ENCODE measurements at regions of chr11 and their contacts with region 1.

Region 1: GRCh38 chr11:5684646-5685362 is at the start of gene TRIM5:
- DNase-seq: peak; percentile 93 to 96 (median 94)
- ATAC-seq: peak; percentile 99
- H3K4me3 ChIP-seq: peak within 1 kb of the TSS; percentile 45
- H3K27ac ChIP-seq: peak within 1 kb of the TSS; percentile 89
- H3K4me1 ChIP-seq: peaks cover 0 to 2% of the 10 kb centered on the region in 2 experiments; a peak in 2 of 5 replicates
- H3K27me3 ChIP-seq: no peaks in the 10 kb centered on the region
- CTCF ChIP-seq: peak; percentile 77 to 84 (median 82)
- EP300 ChIP-seq: peak; percentile 45; the same call in 1 of the 2 replicates
- POLR2A ChIP-seq: peak; percentile 75
- RAD21 ChIP-seq: peak; percentile 76 to 82
- polyA plus RNA-seq, gene TRIM5: 13.7 to 18.0 TPM

Region 2: GRCh38 chr11:5696210-5696609 is 11.4 kb after region 1 on chr11:
- CTCF ChIA-PET with region 1: no interaction called
- POLR2A ChIA-PET with region 1: interaction called, 12 read pairs
- in situ Hi-C with region 1: no loop called
- intact Hi-C with region 1: no loop called
- DNase-seq: no peak
- ATAC-seq: no peak
- H3K4me3 ChIP-seq: no peak overlapping the region
- H3K27ac ChIP-seq: no peak overlapping the region
- H3K4me1 ChIP-seq: peaks cover 0 to 10% of the 10 kb centered on the region in 2 experiments; a peak in 3 of 5 replicates
- H3K27me3 ChIP-seq: peaks cover 0 to 4% of the 10 kb centered on the region in 2 experiments; a peak in 2 of 5 replicates
- CTCF ChIP-seq: no peak
- EP300 ChIP-seq: no peak
- POLR2A ChIP-seq: no peak
- RAD21 ChIP-seq: no peak

Region 3: DNA sequence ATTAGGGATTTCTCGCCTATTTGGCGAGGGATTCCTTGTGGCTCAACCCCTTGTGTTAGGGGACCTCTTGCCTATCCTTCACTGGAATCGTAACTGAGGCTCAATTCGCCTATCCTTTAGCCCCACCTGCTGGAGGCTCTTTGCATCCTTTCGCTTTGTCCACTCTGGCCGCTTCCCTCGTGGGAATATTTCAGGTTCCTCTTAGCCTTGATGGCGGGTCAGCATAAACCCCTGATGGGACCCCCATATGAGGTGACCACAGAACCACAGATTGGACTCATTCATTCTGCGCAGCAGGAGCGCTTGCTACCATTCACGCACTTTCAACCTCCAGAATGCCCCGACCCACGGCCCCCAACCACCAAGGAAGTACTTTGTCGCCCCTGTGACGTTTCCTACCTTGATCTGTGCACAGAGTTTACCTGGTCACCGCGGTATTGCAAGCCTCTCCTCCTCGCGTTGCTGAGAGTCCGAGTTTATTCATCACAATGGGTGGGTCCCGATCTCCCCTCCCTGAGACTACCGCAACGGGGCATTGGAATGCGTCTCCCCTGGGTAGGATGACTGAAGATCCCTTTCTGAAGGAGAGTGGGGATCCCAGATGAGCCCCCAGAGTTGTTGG is 123.8 kb after region 1 on chr11 and contains the start of gene OR52N2:
- CTCF ChIA-PET with region 1: no interaction called
- POLR2A ChIA-PET with region 1: no interaction called
- in situ Hi-C with region 1: no loop called
- intact Hi-C with region 1: loop called (anchors 1 kb)
- DNase-seq: peak; percentile 17 to 60 (median 26)
- ATAC-seq: peak; percentile 70
- H3K4me3 ChIP-seq: no peak within 1 kb of the TSS
- H3K27ac ChIP-seq: peak within 1 kb of the TSS; percentile 73; the same call in 1 of the 3 replicates
- H3K4me1 ChIP-seq: peaks cover 0 to 6% of the 10 kb centered on the region in 2 experiments; a peak in 2 of 5 replicates
- H3K27me3 ChIP-seq: no peaks in the 10 kb centered on the region
- CTCF ChIP-seq: peak; percentile 48 to 56 (median 53); a peak in 5 of 6 replicates
- EP300 ChIP-seq: no peak
- POLR2A ChIP-seq: no peak
- RAD21 ChIP-seq: peak; percentile 26 to 68; a peak in 3 of 4 replicates
- polyA plus RNA-seq, gene OR52N2: not detected

Region 4: GRCh38 chr11:5891216-5891800 is 206.5 kb after region 1 on chr11:
- CTCF ChIA-PET with region 1: interaction called, 7 read pairs
- POLR2A ChIA-PET with region 1: interaction called, 3 read pairs
- in situ Hi-C with region 1: no loop called
- intact Hi-C with region 1: loop called (anchors 1 kb)
- DNase-seq: peak; percentile 11 to 20 (median 11)
- ATAC-seq: no peak
- H3K4me3 ChIP-seq: no peak overlapping the region
- H3K27ac ChIP-seq: no peak overlapping the region
- H3K4me1 ChIP-seq: no peaks in the 10 kb centered on the region
- H3K27me3 ChIP-seq: peaks cover 0 to 2% of the 10 kb centered on the region in 2 experiments; a peak in 1 of 5 replicates
- CTCF ChIP-seq: peak in 2 of 3 experiments; percentile 43 to 66; a peak in 4 of 6 replicates
- EP300 ChIP-seq: no peak
- POLR2A ChIP-seq: no peak
- RAD21 ChIP-seq: peak; percentile 84 to 85

Region 5: DNA sequence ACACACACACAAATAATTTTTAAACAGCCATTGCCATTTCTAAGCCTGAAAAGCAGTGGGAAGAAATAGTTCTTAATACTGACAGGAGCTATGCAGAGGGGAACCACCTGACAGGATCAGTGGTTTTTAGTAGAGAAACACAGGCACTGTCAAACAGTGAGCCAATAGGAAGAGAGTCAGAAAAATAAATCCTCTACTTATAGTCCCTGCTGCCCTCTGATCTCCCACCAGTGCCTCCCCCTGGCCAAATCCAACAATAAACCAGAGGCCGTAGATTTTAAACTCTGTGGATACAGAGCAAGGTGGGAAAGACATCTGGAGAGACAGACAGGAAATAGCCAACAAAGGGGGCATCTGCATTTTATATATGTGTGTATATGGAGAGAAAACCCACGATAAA is 414.8 kb after region 1 on chr11:
- CTCF ChIA-PET with region 1: no interaction called
- POLR2A ChIA-PET with region 1: no interaction called
- in situ Hi-C with region 1: no loop called
- intact Hi-C with region 1: no loop called
- DNase-seq: no peak
- ATAC-seq: peak; percentile 49; the same call in 1 of the 3 replicates
- H3K4me3 ChIP-seq: no peak overlapping the region
- H3K27ac ChIP-seq: no peak overlapping the region
- H3K4me1 ChIP-seq: no peaks in the 10 kb centered on the region
- H3K27me3 ChIP-seq: no peaks in the 10 kb centered on the region
- CTCF ChIP-seq: no peak
- EP300 ChIP-seq: no peak
- POLR2A ChIP-seq: no peak
- RAD21 ChIP-seq: no peak

Measured in K562 (cell line).